ENCODE measurements at regions of chr5 and their contacts with region 1.

Region 1: DNA sequence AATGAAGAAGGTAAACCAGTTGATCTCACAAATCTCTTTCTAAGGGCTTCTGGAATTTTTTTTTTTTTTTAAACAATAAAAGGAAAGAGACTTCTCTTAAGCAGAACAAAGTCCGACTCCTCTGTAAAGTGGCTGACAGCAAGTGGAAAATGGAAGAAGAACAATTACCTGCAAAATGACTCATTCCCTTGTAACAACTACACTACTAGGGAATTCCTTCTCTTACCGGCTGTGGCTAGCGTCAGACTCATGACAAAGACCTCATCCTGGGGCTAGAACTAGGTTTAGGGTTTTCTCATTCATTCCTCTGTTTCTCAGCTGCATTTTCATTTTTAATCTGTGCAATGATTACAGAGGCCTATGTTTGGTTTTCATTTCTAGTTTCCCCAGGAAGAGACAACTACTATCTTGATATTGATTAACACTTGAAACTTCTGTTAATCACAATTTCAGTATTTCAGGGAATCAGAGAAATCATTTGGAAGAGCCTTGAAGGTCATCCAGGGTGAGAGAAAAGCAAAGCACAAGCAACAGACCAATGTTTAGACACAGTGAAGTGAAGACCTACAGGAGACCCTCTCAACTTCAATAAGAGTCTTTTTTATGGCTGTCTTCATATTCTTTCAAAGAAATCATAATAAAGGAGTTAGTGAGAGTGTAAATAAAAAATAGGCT is 437.9 kb downstream of the RAB3C start:
- DNase-seq: peak in 1 of 35 experiments; percentile 21
- ATAC-seq: peak in 1 of 4 experiments; percentile 42
- H3K4me3 ChIP-seq: no peak overlapping the region
- H3K4me3 Mint-ChIP-seq: peak overlapping the region in 1 of 3 donors; percentile 31
- H3K27ac ChIP-seq: no peak overlapping the region
- H3K27ac Mint-ChIP-seq: peak overlapping the region; percentile 33 to 53
- H3K4me1 ChIP-seq: peaks cover 7 to 8% of the 10 kb centered on the region in 2 experiments
- H3K4me1 Mint-ChIP-seq: peaks cover 50 to 68% (median 59%) of the 10 kb centered on the region in 3 donors
- H3K27me3 ChIP-seq: no peaks in the 10 kb centered on the region
- H3K27me3 Mint-ChIP-seq: no peaks in the 10 kb centered on the region

Region 2: DNA sequence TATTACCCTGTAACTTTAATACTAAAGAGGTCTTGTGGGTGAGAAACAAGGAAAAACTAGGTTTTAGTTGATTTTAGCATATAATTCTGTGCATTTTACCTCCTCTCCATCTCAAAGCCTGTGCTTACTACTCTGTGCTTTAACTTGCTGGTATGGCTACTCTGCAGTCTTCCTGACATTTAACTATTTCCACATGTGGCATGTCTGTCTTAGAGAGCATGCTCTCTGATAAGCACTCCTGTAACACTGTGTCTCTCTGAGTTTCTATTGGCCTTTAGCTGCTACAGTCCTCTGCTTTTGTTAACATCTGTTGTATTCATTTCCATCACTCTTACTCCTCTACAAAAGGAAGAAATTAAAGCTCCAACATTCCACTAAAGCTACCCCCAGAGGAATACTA is 19.6 kb before region 1 on chr5:
- CTCF ChIA-PET with region 1: interaction called in 1 of 2 experiments, 3 read pairs
- POLR2A ChIA-PET with region 1: interaction called in 1 of 2 experiments, 13 read pairs
- DNase-seq: no peak
- ATAC-seq: peak in 1 of 4 experiments; percentile 21
- H3K4me3 ChIP-seq: no peak overlapping the region
- H3K4me3 Mint-ChIP-seq: no peak overlapping the region
- H3K27ac ChIP-seq: no peak overlapping the region
- H3K27ac Mint-ChIP-seq: no peak overlapping the region
- H3K4me1 ChIP-seq: peaks cover 2 to 43% of the 10 kb centered on the region in 2 experiments
- H3K4me1 Mint-ChIP-seq: peaks cover 66 to 71% (median 68%) of the 10 kb centered on the region in 3 donors
- H3K27me3 ChIP-seq: no peaks in the 10 kb centered on the region
- H3K27me3 Mint-ChIP-seq: no peaks in the 10 kb centered on the region